ENCODE measurements at regions of chr21 and their contacts with region 1.

Region 1: GRCh38 chr21:45292399-45293219 is 4.9 kb upstream of the POFUT2 start:
- DNase-seq: peak; percentile 66 to 98 (median 87)

Region 2: DNA sequence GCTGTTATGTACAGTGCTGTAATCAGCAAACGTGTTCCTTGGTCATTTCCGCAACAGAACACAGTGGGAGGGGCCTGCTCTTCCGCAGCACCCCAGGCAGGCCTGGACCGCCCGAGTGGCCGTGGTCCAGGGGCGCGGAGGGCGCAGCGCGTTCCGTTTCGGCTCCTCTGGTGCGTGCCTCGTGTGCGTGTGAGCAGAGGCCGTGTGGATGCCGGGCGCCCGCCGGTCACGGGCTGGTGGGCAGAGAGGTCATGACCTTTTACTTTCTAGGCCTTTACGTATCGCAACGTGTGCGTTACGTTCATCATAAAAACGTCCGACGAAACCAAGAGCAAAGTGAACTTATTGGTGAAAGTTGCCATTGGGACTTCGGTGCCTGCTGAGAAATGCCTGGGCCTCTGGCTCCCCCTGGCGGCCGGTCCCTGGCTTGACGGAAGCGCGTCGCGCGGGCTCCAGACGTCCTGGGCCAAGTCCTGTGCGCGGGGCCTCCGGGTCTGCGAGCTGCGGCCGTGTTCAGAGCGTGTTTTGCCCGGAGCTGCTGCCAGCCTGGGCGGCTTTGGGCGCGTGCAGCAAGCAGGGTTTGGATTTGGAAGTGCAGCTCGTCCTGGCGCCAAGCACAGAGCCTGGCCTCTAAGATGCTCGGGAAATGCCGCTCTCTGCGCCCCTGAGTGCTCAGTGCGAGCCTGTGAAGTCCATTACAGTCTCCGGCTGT is 146.7 kb after region 1 on chr21:
- intact Hi-C with region 1: loop called (anchors 1 kb)
- DNase-seq: peak; percentile 66 to 97 (median 86)

Region 3: GRCh38 chr21:45596704-45597318 is 304.2 kb after region 1 on chr21:
- intact Hi-C with region 1: loop called (anchors 5 kb)
- DNase-seq: peak in 8 of 10 donors; percentile 43 to 91 (median 68)

Region 4: GRCh38 chr21:45820171-45821091 is 527.8 kb after region 1 on chr21:
- intact Hi-C with region 1: loop called (anchors 2 kb)
- DNase-seq: peak; percentile 60 to 97 (median 82)